ENCODE measurements at regions of chr7 and their contacts with region 1.

Region 1: GRCh38 chr7:26278770-26279169 is 12.9 kb upstream of the SNX10 start:
- DNase-seq: no peak
- ATAC-seq: peak; percentile 16
- H3K4me3 ChIP-seq: no peak overlapping the region
- H3K4me1 ChIP-seq: no peaks in the 10 kb centered on the region
- CTCF ChIP-seq: no peak

Region 2: GRCh38 chr7:26346611-26347203 is 67.9 kb after region 1 on chr7:
- intact Hi-C with region 1: loop called in 1 of 2 experiments (anchors 10 kb)
- DNase-seq: peak in 2 of 3 donors; percentile 68 to 80
- ATAC-seq: peak; percentile 75
- H3K4me3 ChIP-seq: no peak overlapping the region
- H3K4me1 ChIP-seq: peaks cover 15% of the 10 kb centered on the region
- CTCF ChIP-seq: no peak

Region 3: GRCh38 chr7:26646336-26647053 is 367.7 kb after region 1 on chr7:
- intact Hi-C with region 1: no loop called
- DNase-seq: no peak
- ATAC-seq: no peak
- H3K4me3 ChIP-seq: no peak overlapping the region
- H3K4me1 ChIP-seq: no peaks in the 10 kb centered on the region
- CTCF ChIP-seq: no peak

Measured in mucosa of descending colon (tissue), 3 donors.